ENCODE measurements at regions of chrX and their contacts with region 1.

Region 1: GRCh38 chrX:19709812-19710518 is 177.4 kb downstream of the SH3KBP1 start:
- DNase-seq: no peak
- ATAC-seq: no peak
- H3K4me3 Mint-ChIP-seq: no peak overlapping the region
- H3K27ac Mint-ChIP-seq: no peak overlapping the region
- H3K4me1 Mint-ChIP-seq: peaks cover 51% of the 10 kb centered on the region
- H3K27me3 Mint-ChIP-seq: no peaks in the 10 kb centered on the region

Region 2: DNA sequence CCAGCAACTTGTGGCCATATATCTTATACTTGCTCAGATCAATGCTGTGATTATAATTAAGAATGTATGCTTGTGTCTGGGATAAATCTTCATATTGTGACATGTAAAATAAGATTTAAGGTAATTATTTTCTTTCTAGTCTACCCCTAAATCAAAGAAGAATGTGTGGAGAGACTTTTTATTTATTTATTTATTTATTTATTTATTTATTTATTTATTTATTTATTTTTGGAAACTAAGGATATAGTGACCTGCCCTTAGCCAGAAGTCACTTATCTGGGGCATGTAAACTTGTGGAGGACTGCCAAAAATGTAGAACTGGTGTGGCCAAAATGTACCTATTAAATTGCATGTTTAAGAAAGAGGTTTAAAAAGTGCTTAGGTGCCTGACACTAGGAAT is 1633.5 kb before region 1 on chrX:
- CTCF ChIA-PET with region 1: no interaction called
- POLR2A ChIA-PET with region 1: no interaction called
- intact Hi-C with region 1: no loop called
- DNase-seq: no peak
- ATAC-seq: no peak
- H3K4me3 Mint-ChIP-seq: no peak overlapping the region
- H3K27ac Mint-ChIP-seq: no peak overlapping the region
- H3K4me1 Mint-ChIP-seq: no peaks in the 10 kb centered on the region
- H3K27me3 Mint-ChIP-seq: peaks cover 4% of the 10 kb centered on the region

Region 3: DNA sequence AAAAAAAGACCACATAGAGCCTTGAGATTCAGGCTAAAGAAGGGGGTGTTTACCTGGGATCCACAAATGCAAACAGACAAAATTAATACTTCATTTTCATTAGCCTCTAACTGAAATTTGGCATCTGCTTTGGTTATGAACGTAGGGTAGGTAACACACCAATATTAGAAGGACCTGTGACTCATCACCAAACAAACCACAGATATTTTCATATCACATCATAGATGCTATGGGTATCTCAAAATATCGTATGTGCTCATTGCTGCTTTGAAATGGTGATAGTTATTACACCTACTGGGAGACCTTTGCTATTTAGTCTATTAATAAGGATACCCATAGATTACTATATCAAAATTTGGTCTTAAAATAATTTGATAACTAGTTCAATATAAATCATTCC is 14.1 kb before region 1 on chrX:
- CTCF ChIA-PET with region 1: no interaction called
- POLR2A ChIA-PET with region 1: no interaction called
- intact Hi-C with region 1: loop called in 1 of 2 experiments (anchors 2 kb)
- DNase-seq: no peak
- ATAC-seq: peak; percentile 39
- H3K4me3 Mint-ChIP-seq: no peak overlapping the region
- H3K27ac Mint-ChIP-seq: no peak overlapping the region
- H3K4me1 Mint-ChIP-seq: peaks cover 31% of the 10 kb centered on the region
- H3K27me3 Mint-ChIP-seq: no peaks in the 10 kb centered on the region

Region 4: GRCh38 chrX:19761554-19762295 is 51.8 kb after region 1 on chrX:
- CTCF ChIA-PET with region 1: no interaction called
- POLR2A ChIA-PET with region 1: no interaction called
- intact Hi-C with region 1: no loop called
- DNase-seq: no peak
- ATAC-seq: no peak
- H3K4me3 Mint-ChIP-seq: no peak overlapping the region
- H3K27ac Mint-ChIP-seq: peak overlapping the region; percentile 58
- H3K4me1 Mint-ChIP-seq: peaks cover 75% of the 10 kb centered on the region
- H3K27me3 Mint-ChIP-seq: no peaks in the 10 kb centered on the region

Measured in activated CD4-positive, alpha-beta T cell treated with anti-CD3 and anti-CD28 coated beads for 36 hours (primary cell).